Psoas muscle (tissue), 8 donors: ENCODE measurements at regions of chr16 and their contacts with region 1.

Region 1: GRCh38 chr16:16127469-16128116 is 95.7 kb downstream of the ABCC6 start:
- DNase-seq: peak; percentile 59 to 75
- ATAC-seq: peak; percentile 86 to 91 (median 88)
- H3K4me3 ChIP-seq: no peak overlapping the region
- H3K27ac ChIP-seq: no peak overlapping the region
- H3K4me1 ChIP-seq: no peaks in the 10 kb centered on the region
- H3K27me3 ChIP-seq: no peaks in the 10 kb centered on the region
- CTCF ChIP-seq: peak; percentile 87

Region 2: GRCh38 chr16:15857724-15858560 is 269.7 kb before region 1 on chr16:
- intact Hi-C with region 1: loop called in 1 of 2 experiments (anchors 5 kb)
- DNase-seq: peak; percentile 26 to 56
- ATAC-seq: peak; percentile 29 to 51 (median 45)
- H3K4me3 ChIP-seq: peak overlapping the region; percentile 61
- H3K27ac ChIP-seq: peak overlapping the region; percentile 21
- H3K4me1 ChIP-seq: peaks cover 15% of the 10 kb centered on the region
- H3K27me3 ChIP-seq: peaks cover 0 to 13% (median 4%) of the 10 kb centered on the region in 3 donors
- CTCF ChIP-seq: no peak

Region 3: DNA sequence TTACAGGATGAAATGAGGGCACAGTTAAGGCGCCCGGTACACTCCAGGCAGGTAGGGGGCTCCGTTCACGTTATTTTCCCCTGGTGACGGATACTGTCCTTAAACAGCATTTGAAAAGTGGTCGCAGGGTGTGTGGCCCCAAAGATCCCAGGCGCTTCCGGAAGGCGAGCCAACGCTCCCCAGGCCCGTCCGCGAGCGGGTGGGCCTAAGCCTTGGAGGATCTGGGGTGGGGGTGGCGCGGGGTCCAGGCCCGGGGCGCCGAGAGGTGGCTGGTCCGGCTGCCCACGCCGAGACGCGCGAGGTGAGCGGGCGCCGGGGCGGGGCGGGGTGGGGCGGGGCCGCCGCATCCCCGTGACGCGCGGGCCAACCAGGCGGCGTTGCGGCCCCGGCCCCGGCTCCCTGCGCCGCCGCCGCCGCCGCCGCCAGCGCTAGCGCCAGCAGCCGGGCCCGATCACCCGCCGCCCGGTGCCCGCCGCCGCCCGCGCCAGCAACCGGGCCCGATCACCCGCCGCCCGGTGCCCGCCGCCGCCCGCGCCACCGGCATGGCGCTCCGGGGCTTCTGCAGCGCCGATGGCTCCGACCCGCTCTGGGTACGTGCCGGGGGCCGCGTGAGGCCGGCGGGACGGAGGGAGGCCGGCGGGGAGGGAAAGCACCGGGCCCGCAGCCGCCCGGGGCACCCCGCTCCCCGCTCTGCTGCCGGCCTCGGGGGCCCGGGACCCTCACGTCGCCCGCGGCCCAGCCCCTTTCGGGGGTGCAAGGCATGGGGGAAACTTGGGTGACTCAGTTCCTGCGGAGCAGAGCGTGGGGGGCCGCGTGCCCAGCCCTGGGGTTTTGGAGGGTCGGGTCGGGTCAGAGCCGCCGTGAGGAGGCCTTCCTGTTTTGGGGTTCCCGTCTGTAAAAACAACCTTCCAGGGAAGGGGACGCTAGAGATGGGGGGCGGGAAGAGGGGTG is 178.1 kb before region 1 on chr16 and contains the start of gene ABCC1:
- intact Hi-C with region 1: no loop called
- DNase-seq: peak; percentile 52 to 69
- ATAC-seq: peak; percentile 78 to 81 (median 79)
- H3K4me3 ChIP-seq: peak within 1 kb of the TSS; percentile 83
- H3K27ac ChIP-seq: peak within 1 kb of the TSS; percentile 83
- H3K4me1 ChIP-seq: peaks cover 27% of the 10 kb centered on the region
- H3K27me3 ChIP-seq: no peaks in the 10 kb centered on the region
- CTCF ChIP-seq: no peak
- total RNA-seq, gene ABCC1: 19.5 to 36.5 (median 30.3) TPM

Region 4: GRCh38 chr16:16109453-16110108 is 18.0 kb before region 1 on chr16:
- intact Hi-C with region 1: no loop called
- DNase-seq: no peak
- ATAC-seq: no peak
- H3K4me3 ChIP-seq: no peak overlapping the region
- H3K27ac ChIP-seq: no peak overlapping the region
- H3K4me1 ChIP-seq: no peaks in the 10 kb centered on the region
- H3K27me3 ChIP-seq: no peaks in the 10 kb centered on the region
- CTCF ChIP-seq: no peak